ENCODE measurements at regions of chr4 and their contacts with region 1.

Region 1: DNA sequence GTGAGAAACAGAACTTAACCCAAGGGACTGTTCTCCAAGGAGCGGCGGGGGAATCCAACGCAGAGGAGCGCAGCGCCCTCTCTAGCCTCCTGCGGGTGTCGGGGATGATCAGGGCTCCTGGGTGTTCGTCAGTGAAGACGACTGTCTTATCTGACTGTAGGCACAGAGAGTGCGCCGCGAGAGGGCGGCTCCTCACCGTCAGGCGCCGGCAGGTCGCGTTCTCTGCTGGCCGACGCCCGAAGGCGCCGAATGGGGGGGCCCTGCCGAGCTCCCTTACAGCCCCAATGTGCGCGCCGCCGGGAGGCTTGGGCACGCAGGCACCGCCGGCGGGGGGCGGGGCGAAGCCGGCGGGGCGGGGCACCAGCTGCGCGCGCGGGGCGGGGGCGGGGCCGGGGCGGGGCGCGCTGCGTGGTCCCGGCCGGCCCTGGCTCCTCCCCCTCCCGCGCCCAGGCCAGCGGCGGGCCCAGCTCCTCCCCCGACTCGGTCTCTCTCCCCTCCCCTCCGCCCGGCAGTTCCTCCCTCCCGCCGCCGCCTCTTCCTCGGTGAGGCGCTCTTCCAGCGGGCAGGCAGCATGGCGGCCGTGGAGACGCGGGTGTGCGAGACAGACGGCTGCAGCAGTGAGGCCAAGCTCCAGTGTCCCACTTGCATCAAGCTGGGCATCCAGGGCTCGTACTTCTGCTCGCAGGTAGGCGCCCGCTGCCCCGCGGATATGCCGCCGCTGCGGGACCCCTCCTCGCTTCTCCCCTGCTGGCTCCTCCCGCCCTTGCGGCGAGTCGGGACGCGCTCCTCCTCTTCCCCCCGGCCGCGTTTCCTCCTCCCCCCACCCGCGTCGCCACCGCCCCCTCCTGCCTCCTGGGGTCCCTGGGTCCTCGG is at the start of gene METAP1:
- DNase-seq: peak; percentile 90 to 99 (median 97)
- ATAC-seq: peak; percentile 88 to 89 (median 88)
- H3K4me3 ChIP-seq: peak within 1 kb of the TSS; percentile 69 to 97
- H3K4me3 Mint-ChIP-seq: peak within 1 kb of the TSS; percentile 82 to 87 (median 86)
- H3K27ac ChIP-seq: peak within 1 kb of the TSS; percentile 93
- H3K27ac Mint-ChIP-seq: peak within 1 kb of the TSS; percentile 99
- H3K4me1 ChIP-seq: peaks cover 12 to 16% of the 10 kb centered on the region in 2 experiments
- H3K4me1 Mint-ChIP-seq: peaks cover 39 to 49% (median 44%) of the 10 kb centered on the region in 3 donors
- H3K27me3 ChIP-seq: no peaks in the 10 kb centered on the region
- H3K27me3 Mint-ChIP-seq: no peaks in the 10 kb centered on the region
- total RNA-seq, gene METAP1: 32.9 to 39.8 (median 39.2) TPM

Region 2: GRCh38 chr4:98260579-98261290 is 734.7 kb before region 1 on chr4:
- CTCF ChIA-PET with region 1: interaction called in 1 of 2 experiments, 10 read pairs
- POLR2A ChIA-PET with region 1: no interaction called
- DNase-seq: peak in 30 of 35 experiments; percentile 8 to 93 (median 74)
- ATAC-seq: peak; percentile 78 to 87 (median 85)
- H3K4me3 ChIP-seq: peak overlapping the region; percentile 95 to 98
- H3K4me3 Mint-ChIP-seq: peak overlapping the region; percentile 92 to 97 (median 94)
- H3K27ac ChIP-seq: peak overlapping the region; percentile 87
- H3K27ac Mint-ChIP-seq: peak overlapping the region; percentile 96 to 97
- H3K4me1 ChIP-seq: peaks cover 14 to 23% of the 10 kb centered on the region in 2 experiments
- H3K4me1 Mint-ChIP-seq: peaks cover 48 to 54% (median 49%) of the 10 kb centered on the region in 3 donors
- H3K27me3 ChIP-seq: no peaks in the 10 kb centered on the region
- H3K27me3 Mint-ChIP-seq: no peaks in the 10 kb centered on the region

Region 3: GRCh38 chr4:98950925-98951324 is 44.5 kb before region 1 on chr4:
- CTCF ChIA-PET with region 1: no interaction called
- POLR2A ChIA-PET with region 1: no interaction called
- DNase-seq: no peak
- ATAC-seq: no peak
- H3K4me3 ChIP-seq: no peak overlapping the region
- H3K4me3 Mint-ChIP-seq: no peak overlapping the region
- H3K27ac ChIP-seq: no peak overlapping the region
- H3K27ac Mint-ChIP-seq: no peak overlapping the region
- H3K4me1 ChIP-seq: no peaks in the 10 kb centered on the region
- H3K4me1 Mint-ChIP-seq: no peaks in the 10 kb centered on the region
- H3K27me3 ChIP-seq: peaks cover 0 to 3% of the 10 kb centered on the region in 2 experiments
- H3K27me3 Mint-ChIP-seq: peaks cover 3 to 8% of the 10 kb centered on the region in 2 donors

Region 4: GRCh38 chr4:99028187-99028586 is 32.8 kb after region 1 on chr4:
- CTCF ChIA-PET with region 1: interaction called in 1 of 2 experiments, 26 read pairs
- POLR2A ChIA-PET with region 1: interaction called in 1 of 2 experiments, 4 read pairs
- DNase-seq: no peak
- ATAC-seq: no peak
- H3K4me3 ChIP-seq: no peak overlapping the region
- H3K4me3 Mint-ChIP-seq: no peak overlapping the region
- H3K27ac ChIP-seq: no peak overlapping the region
- H3K27ac Mint-ChIP-seq: no peak overlapping the region
- H3K4me1 ChIP-seq: peaks cover 0 to 4% of the 10 kb centered on the region in 2 experiments
- H3K4me1 Mint-ChIP-seq: peaks cover 73 to 88% (median 79%) of the 10 kb centered on the region in 3 donors
- H3K27me3 ChIP-seq: no peaks in the 10 kb centered on the region
- H3K27me3 Mint-ChIP-seq: no peaks in the 10 kb centered on the region

Region 5: DNA sequence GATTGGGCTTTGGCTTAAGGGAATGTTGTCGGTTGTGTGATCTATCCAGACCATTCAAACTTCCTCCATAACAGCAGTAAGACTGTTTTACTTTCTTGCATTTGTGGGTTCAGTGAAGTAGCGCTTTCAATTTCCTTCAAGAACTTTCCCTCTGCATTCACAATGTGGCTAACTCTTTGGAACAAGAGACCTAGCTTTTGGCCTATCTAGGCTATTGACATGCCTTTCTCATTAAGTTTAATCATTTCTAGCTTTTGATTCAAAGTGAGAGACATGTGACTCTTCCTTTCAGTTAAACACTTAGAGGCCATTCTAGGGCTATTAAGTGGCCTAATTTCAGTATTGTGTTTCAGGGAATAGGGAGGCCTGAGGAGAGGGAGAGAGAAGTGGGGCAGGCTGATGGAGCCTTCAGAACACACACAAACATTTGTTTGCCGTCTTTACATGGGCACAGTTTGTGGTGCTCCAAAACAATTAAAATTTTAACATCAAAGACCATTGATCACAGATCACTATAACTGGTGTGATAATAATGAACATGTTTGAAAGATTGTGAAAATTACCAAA is 59.1 kb after region 1 on chr4:
- CTCF ChIA-PET with region 1: interaction called, 48 to 105 read pairs
- POLR2A ChIA-PET with region 1: interaction called, 4 to 8 read pairs
- DNase-seq: no peak
- ATAC-seq: no peak
- H3K4me3 ChIP-seq: no peak overlapping the region
- H3K4me3 Mint-ChIP-seq: no peak overlapping the region
- H3K27ac ChIP-seq: no peak overlapping the region
- H3K27ac Mint-ChIP-seq: peak overlapping the region; percentile 43 to 76
- H3K4me1 ChIP-seq: no peaks in the 10 kb centered on the region
- H3K4me1 Mint-ChIP-seq: peaks cover 8 to 24% (median 19%) of the 10 kb centered on the region in 3 donors
- H3K27me3 ChIP-seq: no peaks in the 10 kb centered on the region
- H3K27me3 Mint-ChIP-seq: no peaks in the 10 kb centered on the region

Region 6: GRCh38 chr4:99180382-99181070 is 185.1 kb after region 1 on chr4:
- CTCF ChIA-PET with region 1: no interaction called
- POLR2A ChIA-PET with region 1: no interaction called
- DNase-seq: no peak
- ATAC-seq: no peak
- H3K4me3 ChIP-seq: no peak overlapping the region
- H3K4me3 Mint-ChIP-seq: no peak overlapping the region
- H3K27ac ChIP-seq: no peak overlapping the region
- H3K27ac Mint-ChIP-seq: no peak overlapping the region
- H3K4me1 ChIP-seq: no peaks in the 10 kb centered on the region
- H3K4me1 Mint-ChIP-seq: no peaks in the 10 kb centered on the region
- H3K27me3 ChIP-seq: no peaks in the 10 kb centered on the region
- H3K27me3 Mint-ChIP-seq: peaks cover 0 to 2% of the 10 kb centered on the region in 2 donors

Region 7: GRCh38 chr4:99235955-99236354 is 240.5 kb after region 1 on chr4:
- CTCF ChIA-PET with region 1: no interaction called
- POLR2A ChIA-PET with region 1: no interaction called
- DNase-seq: no peak
- ATAC-seq: no peak
- H3K4me3 ChIP-seq: no peak overlapping the region
- H3K4me3 Mint-ChIP-seq: no peak overlapping the region
- H3K27ac ChIP-seq: no peak overlapping the region
- H3K27ac Mint-ChIP-seq: no peak overlapping the region
- H3K4me1 ChIP-seq: no peaks in the 10 kb centered on the region
- H3K4me1 Mint-ChIP-seq: no peaks in the 10 kb centered on the region
- H3K27me3 ChIP-seq: no peaks in the 10 kb centered on the region
- H3K27me3 Mint-ChIP-seq: peaks cover 0 to 8% of the 10 kb centered on the region in 2 donors

Region 8: GRCh38 chr4:99563310-99564186 is 568.1 kb after region 1 on chr4 and contains the start of gene TRMT10A:
- CTCF ChIA-PET with region 1: interaction called in 1 of 2 experiments, 10 read pairs
- POLR2A ChIA-PET with region 1: interaction called in 1 of 2 experiments, 3 read pairs
- DNase-seq: peak; percentile 86 to 99 (median 97)
- ATAC-seq: peak; percentile 88 to 93 (median 92)
- H3K4me3 ChIP-seq: peak within 1 kb of the TSS; percentile 80 to 91
- H3K4me3 Mint-ChIP-seq: peak within 1 kb of the TSS; percentile 86 to 99 (median 98)
- H3K27ac ChIP-seq: peak within 1 kb of the TSS; percentile 99
- H3K27ac Mint-ChIP-seq: peak within 1 kb of the TSS; percentile 99 to 100
- H3K4me1 ChIP-seq: peaks cover 2 to 12% of the 10 kb centered on the region in 2 experiments
- H3K4me1 Mint-ChIP-seq: peaks cover 17 to 26% (median 20%) of the 10 kb centered on the region in 3 donors
- H3K27me3 ChIP-seq: peaks cover 4 to 5% of the 10 kb centered on the region in 2 experiments
- H3K27me3 Mint-ChIP-seq: peaks cover 24 to 25% of the 10 kb centered on the region in 2 donors
- total RNA-seq, gene TRMT10A: 3.4 to 5.3 (median 4.0) TPM

Measured in T-cell (primary cell).